Sigmoid colon (tissue), 7 donors: ENCODE measurements at regions of chr1 and their contacts with region 1.

Region 1: DNA sequence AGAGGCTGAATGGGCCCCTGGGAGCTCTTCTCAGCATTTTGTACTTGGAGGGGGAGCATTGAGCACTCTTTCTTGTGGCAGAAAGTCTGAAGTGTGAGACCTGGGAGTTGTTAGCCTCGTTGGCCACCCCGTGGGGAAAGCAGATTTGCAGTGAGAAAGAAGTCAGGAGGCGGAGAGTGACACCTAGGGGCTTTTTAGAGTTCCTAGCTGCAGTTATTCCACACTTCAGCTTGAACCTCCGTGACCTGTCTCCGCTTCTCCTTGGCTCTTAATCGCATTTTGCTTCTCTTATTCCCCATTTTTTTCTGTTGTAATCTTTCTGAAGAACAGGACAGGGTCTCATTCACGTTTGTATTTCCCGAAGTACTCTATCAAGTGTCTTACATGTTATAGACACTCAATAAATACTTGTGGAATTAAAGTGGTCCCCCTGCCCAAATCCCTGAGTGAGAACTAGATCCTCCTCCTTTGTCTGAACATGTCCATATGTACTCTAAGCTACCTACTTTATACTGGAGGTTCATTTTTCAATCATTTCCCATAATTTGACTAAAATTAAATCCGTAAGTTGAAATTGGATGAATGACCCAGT is 14.5 kb upstream of the C1orf141 start:
- DNase-seq: peak; percentile 82
- H3K4me3 ChIP-seq: no peak overlapping the region
- H3K27ac ChIP-seq: no peak overlapping the region
- H3K4me1 ChIP-seq: peaks cover 0 to 8% (median 3%) of the 10 kb centered on the region in 4 donors
- H3K27me3 ChIP-seq: no peaks in the 10 kb centered on the region
- CTCF ChIP-seq: peak; percentile 81 to 91 (median 86)
- EP300 ChIP-seq: no peak
- POLR2A ChIP-seq: no peak

Region 2: DNA sequence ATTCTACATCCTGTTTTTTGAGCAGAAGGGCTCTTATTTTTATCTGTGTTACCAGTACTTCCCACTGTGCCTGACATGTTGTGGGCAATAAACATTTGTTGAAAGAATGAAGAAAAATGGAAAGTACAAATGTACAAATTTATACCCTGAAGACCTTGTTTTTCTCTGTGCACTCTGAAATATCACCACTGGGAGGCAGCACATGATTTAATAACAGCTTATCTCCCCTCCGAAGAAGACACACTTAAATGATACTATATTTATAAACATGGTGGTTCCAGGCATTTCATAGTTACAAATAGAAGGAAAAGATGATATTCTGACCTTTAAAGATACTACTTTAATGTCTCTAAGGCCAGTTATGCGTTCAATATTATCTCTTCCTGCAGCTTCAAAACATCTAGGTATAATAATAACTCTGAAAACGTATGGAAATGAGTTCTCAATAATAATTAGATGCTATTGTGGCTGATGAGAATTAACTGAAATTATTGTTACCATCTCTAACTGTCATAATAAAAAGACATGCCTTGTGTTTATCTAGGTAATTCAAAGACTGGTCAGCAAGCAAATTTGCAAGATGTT is 384.2 kb before region 1 on chr1:
- intact Hi-C with region 1: loop called (anchors 2 kb)
- DNase-seq: no peak
- H3K4me3 ChIP-seq: no peak overlapping the region
- H3K27ac ChIP-seq: no peak overlapping the region
- H3K4me1 ChIP-seq: no peaks in the 10 kb centered on the region
- H3K27me3 ChIP-seq: no peaks in the 10 kb centered on the region
- CTCF ChIP-seq: peak in 3 of 4 experiments; percentile 36 to 68 (median 68)
- EP300 ChIP-seq: no peak
- POLR2A ChIP-seq: no peak

Region 3: GRCh38 chr1:66996018-66996682 is 153.1 kb before region 1 on chr1:
- intact Hi-C with region 1: loop called (anchors 1 kb)
- DNase-seq: peak; percentile 70
- H3K4me3 ChIP-seq: no peak overlapping the region
- H3K27ac ChIP-seq: no peak overlapping the region
- H3K4me1 ChIP-seq: peaks cover 0 to 26% (median 16%) of the 10 kb centered on the region in 4 donors
- H3K27me3 ChIP-seq: no peaks in the 10 kb centered on the region
- CTCF ChIP-seq: peak; percentile 63 to 79 (median 66)
- EP300 ChIP-seq: no peak
- POLR2A ChIP-seq: no peak